GM12878 (cell line): ENCODE measurements at regions of chr2 and their contacts with region 1.

Region 1: DNA sequence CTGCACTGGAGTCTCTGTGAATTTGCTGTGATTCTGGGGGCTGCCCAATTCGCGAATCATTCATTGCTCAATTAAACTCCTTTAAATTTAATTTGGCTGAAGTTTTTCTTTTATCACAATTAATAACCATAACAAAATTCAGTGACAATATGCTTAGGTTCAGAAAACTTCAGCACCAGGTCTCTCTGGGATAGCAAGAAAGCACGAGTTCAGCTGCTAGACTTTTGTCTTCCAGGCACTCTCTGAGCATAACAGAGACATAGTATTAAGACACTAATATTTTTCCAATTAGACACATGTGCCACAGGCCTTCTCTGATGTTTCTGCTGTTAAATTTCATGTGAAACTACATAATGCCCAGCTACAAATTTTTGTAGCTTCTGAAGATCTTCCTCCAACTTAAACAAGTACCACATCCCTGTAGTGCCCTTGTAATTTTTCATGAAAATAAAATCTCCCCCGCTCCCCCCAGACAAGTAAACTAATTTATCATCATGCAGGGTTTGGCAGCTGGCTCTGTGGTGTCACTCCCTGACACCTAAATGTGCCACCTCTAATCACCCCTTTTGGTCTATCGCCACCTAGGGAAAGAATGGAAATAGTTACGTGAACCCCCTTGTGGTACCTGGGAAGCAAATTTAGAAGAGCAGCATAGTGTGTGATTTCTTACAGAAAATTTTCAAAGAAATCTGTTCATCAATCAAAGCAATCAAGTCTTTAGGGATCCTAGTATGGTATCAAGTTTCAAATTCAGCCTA is 94.1 kb downstream of the CSRNP3 start:
- DNase-seq: no peak
- ATAC-seq: peak; percentile 81
- H3K4me3 ChIP-seq: no peak overlapping the region
- H3K27ac ChIP-seq: no peak overlapping the region
- H3K4me1 ChIP-seq: no peaks in the 10 kb centered on the region
- H3K27me3 ChIP-seq: no peaks in the 10 kb centered on the region
- CTCF ChIP-seq: peak; percentile 11 to 47 (median 43); a peak in 3 of 6 replicates
- EP300 ChIP-seq: no peak
- POLR2A ChIP-seq: no peak
- RAD21 ChIP-seq: no peak

Region 2: GRCh38 chr2:165450156-165450555 is 113.5 kb before region 1 on chr2:
- CTCF ChIA-PET with region 1: interaction called, 44 read pairs
- POLR2A ChIA-PET with region 1: no interaction called
- RAD21 ChIA-PET with region 1: interaction called, 14 read pairs
- SMC1A ChIA-PET with region 1: interaction called, 52 read pairs
- in situ Hi-C with region 1: no loop called
- intact Hi-C with region 1: no loop called
- DNase-seq: no peak
- ATAC-seq: peak; percentile 59
- H3K4me3 ChIP-seq: no peak overlapping the region
- H3K27ac ChIP-seq: no peak overlapping the region
- H3K4me1 ChIP-seq: no peaks in the 10 kb centered on the region
- H3K27me3 ChIP-seq: no peaks in the 10 kb centered on the region
- CTCF ChIP-seq: no peak; a peak in 1 of 6 replicates
- EP300 ChIP-seq: no peak
- POLR2A ChIP-seq: no peak
- RAD21 ChIP-seq: no peak

Region 3: GRCh38 chr2:165544897-165545296 is 18.8 kb before region 1 on chr2:
- CTCF ChIA-PET with region 1: interaction called, 63 read pairs
- POLR2A ChIA-PET with region 1: no interaction called
- RAD21 ChIA-PET with region 1: interaction called, 7 read pairs
- SMC1A ChIA-PET with region 1: interaction called, 60 read pairs
- in situ Hi-C with region 1: no loop called
- intact Hi-C with region 1: no loop called
- DNase-seq: no peak
- ATAC-seq: peak; percentile 99
- H3K4me3 ChIP-seq: no peak overlapping the region
- H3K27ac ChIP-seq: no peak overlapping the region
- H3K4me1 ChIP-seq: no peaks in the 10 kb centered on the region
- H3K27me3 ChIP-seq: no peaks in the 10 kb centered on the region
- CTCF ChIP-seq: no peak
- EP300 ChIP-seq: peak; percentile 8 to 70; a peak in 1 of 4 replicates
- POLR2A ChIP-seq: no peak
- RAD21 ChIP-seq: no peak

Region 4: GRCh38 chr2:165601928-165602521 is 38.4 kb after region 1 on chr2:
- CTCF ChIA-PET with region 1: interaction called, 5 read pairs
- POLR2A ChIA-PET with region 1: no interaction called
- RAD21 ChIA-PET with region 1: interaction called, 4 read pairs
- SMC1A ChIA-PET with region 1: interaction called, 13 read pairs
- in situ Hi-C with region 1: no loop called
- intact Hi-C with region 1: no loop called
- DNase-seq: no peak
- ATAC-seq: no peak
- H3K4me3 ChIP-seq: no peak overlapping the region
- H3K27ac ChIP-seq: no peak overlapping the region
- H3K4me1 ChIP-seq: no peaks in the 10 kb centered on the region
- H3K27me3 ChIP-seq: no peaks in the 10 kb centered on the region
- CTCF ChIP-seq: no peak
- EP300 ChIP-seq: no peak
- POLR2A ChIP-seq: no peak
- RAD21 ChIP-seq: no peak

Region 5: GRCh38 chr2:165698444-165698894 is 134.8 kb after region 1 on chr2:
- CTCF ChIA-PET with region 1: interaction called, 105 read pairs
- POLR2A ChIA-PET with region 1: interaction called, 3 read pairs
- RAD21 ChIA-PET with region 1: interaction called, 42 read pairs
- SMC1A ChIA-PET with region 1: interaction called, 100 read pairs
- in situ Hi-C with region 1: no loop called
- intact Hi-C with region 1: loop called (anchors 1 kb)
- DNase-seq: peak; percentile 27
- ATAC-seq: peak; percentile 95
- H3K4me3 ChIP-seq: no peak overlapping the region
- H3K27ac ChIP-seq: no peak overlapping the region
- H3K4me1 ChIP-seq: no peaks in the 10 kb centered on the region
- H3K27me3 ChIP-seq: no peaks in the 10 kb centered on the region
- CTCF ChIP-seq: peak; percentile 39 to 69 (median 64); a peak in 5 of 6 replicates
- EP300 ChIP-seq: no peak
- POLR2A ChIP-seq: no peak
- RAD21 ChIP-seq: peak; percentile 53

Region 6: DNA sequence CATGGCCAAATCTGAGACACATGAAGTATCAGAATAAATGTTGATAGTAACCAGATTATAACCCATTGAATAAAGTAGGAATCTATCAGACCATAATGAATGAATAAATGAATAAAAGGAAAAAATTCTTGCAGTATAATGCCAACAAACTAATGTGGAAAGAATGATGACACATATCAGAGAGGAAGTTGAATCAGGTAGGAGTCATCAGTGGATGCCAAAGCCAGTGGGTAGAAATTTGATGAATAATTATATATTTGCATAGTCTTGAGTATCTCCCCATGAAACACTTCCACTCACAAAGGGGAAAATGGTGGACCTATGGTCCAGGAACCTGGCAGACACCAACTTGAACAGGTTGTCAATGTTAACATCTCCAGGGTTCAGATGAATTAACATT is 161.8 kb after region 1 on chr2:
- CTCF ChIA-PET with region 1: no interaction called
- POLR2A ChIA-PET with region 1: no interaction called
- RAD21 ChIA-PET with region 1: no interaction called
- SMC1A ChIA-PET with region 1: no interaction called
- in situ Hi-C with region 1: no loop called
- intact Hi-C with region 1: no loop called
- DNase-seq: no peak
- ATAC-seq: no peak
- H3K4me3 ChIP-seq: no peak overlapping the region
- H3K27ac ChIP-seq: no peak overlapping the region
- H3K4me1 ChIP-seq: no peaks in the 10 kb centered on the region
- H3K27me3 ChIP-seq: no peaks in the 10 kb centered on the region
- CTCF ChIP-seq: no peak
- EP300 ChIP-seq: no peak
- POLR2A ChIP-seq: no peak
- RAD21 ChIP-seq: no peak

Region 7: DNA sequence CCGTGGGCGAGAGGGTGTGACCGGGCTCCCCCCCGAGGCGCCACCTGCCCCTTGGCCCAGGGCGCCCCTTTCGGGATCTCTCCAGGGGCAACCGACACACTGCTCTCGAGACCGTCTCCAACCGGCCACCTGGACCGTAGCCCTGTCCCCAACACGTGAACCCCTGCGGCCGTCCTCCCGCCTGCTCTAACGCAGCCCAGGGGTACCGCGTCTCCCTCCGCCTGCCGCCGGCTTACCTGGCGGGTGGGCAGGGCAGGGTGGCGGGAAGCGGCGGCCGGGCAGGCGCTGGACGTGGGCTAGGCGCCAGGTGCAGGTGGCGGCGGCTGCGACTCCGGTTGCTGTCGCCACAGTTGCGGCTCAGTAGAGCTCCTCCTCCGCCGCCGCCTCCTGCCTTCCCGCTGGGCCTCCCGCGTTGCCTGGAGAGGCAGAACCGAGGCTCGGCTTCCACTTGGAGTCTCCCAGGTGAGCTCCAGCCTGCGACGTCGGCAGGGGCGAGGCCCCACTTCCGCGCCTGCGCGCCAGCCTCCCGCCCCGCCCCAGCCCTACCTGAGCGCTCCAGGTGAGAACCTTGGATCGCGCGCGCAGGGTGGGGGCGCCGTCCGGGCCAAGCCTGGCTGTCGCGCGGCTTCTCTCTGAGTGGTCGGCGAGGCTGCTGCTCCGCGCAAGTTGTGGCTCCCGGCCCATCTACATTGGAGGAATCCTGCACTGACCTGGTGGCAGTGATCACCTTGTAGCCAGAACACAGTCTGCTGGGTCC is 230.3 kb after region 1 on chr2 and contains the start of gene GALNT3:
- CTCF ChIA-PET with region 1: no interaction called
- POLR2A ChIA-PET with region 1: no interaction called
- RAD21 ChIA-PET with region 1: no interaction called
- SMC1A ChIA-PET with region 1: no interaction called
- in situ Hi-C with region 1: no loop called
- intact Hi-C with region 1: no loop called
- DNase-seq: no peak
- ATAC-seq: peak; percentile 59
- H3K4me3 ChIP-seq: peak within 1 kb of the TSS; percentile 71
- H3K27ac ChIP-seq: no peak within 1 kb of the TSS
- H3K4me1 ChIP-seq: peaks cover 6% of the 10 kb centered on the region
- H3K27me3 ChIP-seq: peaks cover 0 to 13% of the 10 kb centered on the region in 2 experiments; a peak in 3 of 4 replicates
- CTCF ChIP-seq: no peak
- EP300 ChIP-seq: no peak
- POLR2A ChIP-seq: no peak
- RAD21 ChIP-seq: no peak
- polyA plus RNA-seq, gene GALNT3: 0.56 to 0.66 TPM